ENCODE measurements at regions of chr7 and their contacts with region 1.

Region 1: DNA sequence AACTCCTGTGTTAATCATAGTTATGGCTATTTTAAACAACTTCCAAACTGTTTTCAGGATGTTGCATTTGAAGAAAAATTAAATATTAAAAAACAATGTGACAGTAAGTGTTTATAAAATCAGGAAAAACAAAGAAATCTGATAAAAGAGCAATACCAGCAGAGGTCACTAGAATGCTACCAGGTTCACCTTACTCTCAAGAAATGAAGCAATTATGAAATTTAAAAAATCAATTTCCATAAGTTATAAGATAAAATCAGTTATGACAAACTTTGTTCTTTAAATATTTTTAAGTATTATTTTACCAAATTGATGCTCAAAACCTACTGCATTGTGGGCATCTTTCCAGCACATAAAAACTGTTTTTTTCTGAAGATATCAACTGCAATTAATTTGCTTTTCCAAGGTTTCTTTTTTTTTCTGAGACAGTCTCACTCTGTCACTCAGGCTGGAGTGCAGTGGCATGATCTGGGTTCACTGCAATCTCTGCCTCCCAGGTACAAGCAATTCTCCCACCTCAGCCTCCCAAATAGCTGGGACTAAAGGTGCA is 50.7 kb upstream of the RHEB start:
- DNase-seq: peak; percentile 52
- ATAC-seq: no peak
- H3K4me3 ChIP-seq: no peak overlapping the region
- H3K27ac ChIP-seq: no peak overlapping the region
- H3K4me1 ChIP-seq: peaks cover 12% of the 10 kb centered on the region; the same call in 1 of the 2 replicates
- H3K27me3 ChIP-seq: no peaks in the 10 kb centered on the region
- CTCF ChIP-seq: peak; percentile 72

Region 2: GRCh38 chr7:150974468-150975391 is 595.7 kb before region 1 on chr7:
- CTCF ChIA-PET with region 1: no interaction called
- POLR2A ChIA-PET with region 1: no interaction called
- intact Hi-C with region 1: no loop called
- DNase-seq: peak; percentile 36
- ATAC-seq: peak; percentile 53
- H3K4me3 ChIP-seq: peak overlapping the region; percentile 71
- H3K27ac ChIP-seq: no peak overlapping the region
- H3K4me1 ChIP-seq: no peaks in the 10 kb centered on the region; the same call in 1 of the 2 replicates
- H3K27me3 ChIP-seq: peaks cover 11% of the 10 kb centered on the region
- CTCF ChIP-seq: peak; percentile 29; the same call in 1 of the 2 replicates

Region 3: DNA sequence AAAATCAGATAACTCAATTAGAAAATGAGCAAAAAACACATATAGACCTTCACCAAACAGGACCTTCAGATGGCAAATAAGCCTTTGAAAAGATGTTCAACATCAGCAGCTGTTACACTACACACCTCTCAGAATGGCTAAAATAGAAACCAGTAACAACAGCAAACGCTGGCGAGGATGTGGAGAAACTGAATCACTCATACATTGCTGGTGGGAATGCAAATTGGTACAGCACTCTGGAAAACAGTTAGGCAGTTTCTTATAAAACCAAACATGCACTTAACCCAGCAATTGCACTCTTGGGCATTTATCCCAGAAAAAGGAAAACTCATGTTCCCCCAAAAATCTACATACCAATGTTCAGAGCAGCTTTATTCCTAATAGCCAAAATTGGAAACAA is 284.3 kb before region 1 on chr7:
- CTCF ChIA-PET with region 1: no interaction called
- POLR2A ChIA-PET with region 1: no interaction called
- intact Hi-C with region 1: no loop called
- DNase-seq: no peak
- ATAC-seq: no peak
- H3K4me3 ChIP-seq: no peak overlapping the region
- H3K27ac ChIP-seq: no peak overlapping the region
- H3K4me1 ChIP-seq: no peaks in the 10 kb centered on the region
- H3K27me3 ChIP-seq: peaks cover 26% of the 10 kb centered on the region
- CTCF ChIP-seq: no peak

Region 4: GRCh38 chr7:151459726-151460473 is 110.5 kb before region 1 on chr7:
- CTCF ChIA-PET with region 1: no interaction called
- POLR2A ChIA-PET with region 1: no interaction called
- intact Hi-C with region 1: no loop called
- DNase-seq: peak; percentile 92
- ATAC-seq: peak; percentile 85
- H3K4me3 ChIP-seq: peak overlapping the region; percentile 64
- H3K27ac ChIP-seq: peak overlapping the region; percentile 70
- H3K4me1 ChIP-seq: peaks cover 22% of the 10 kb centered on the region
- H3K27me3 ChIP-seq: no peaks in the 10 kb centered on the region
- CTCF ChIP-seq: peak; percentile 34; the same call in 1 of the 2 replicates

Region 5: GRCh38 chr7:151585744-151586393 is 15.4 kb after region 1 on chr7:
- CTCF ChIA-PET with region 1: no interaction called
- POLR2A ChIA-PET with region 1: no interaction called
- intact Hi-C with region 1: no loop called
- DNase-seq: no peak
- ATAC-seq: no peak
- H3K4me3 ChIP-seq: no peak overlapping the region
- H3K27ac ChIP-seq: no peak overlapping the region
- H3K4me1 ChIP-seq: no peaks in the 10 kb centered on the region
- H3K27me3 ChIP-seq: no peaks in the 10 kb centered on the region
- CTCF ChIP-seq: no peak

Region 6: DNA sequence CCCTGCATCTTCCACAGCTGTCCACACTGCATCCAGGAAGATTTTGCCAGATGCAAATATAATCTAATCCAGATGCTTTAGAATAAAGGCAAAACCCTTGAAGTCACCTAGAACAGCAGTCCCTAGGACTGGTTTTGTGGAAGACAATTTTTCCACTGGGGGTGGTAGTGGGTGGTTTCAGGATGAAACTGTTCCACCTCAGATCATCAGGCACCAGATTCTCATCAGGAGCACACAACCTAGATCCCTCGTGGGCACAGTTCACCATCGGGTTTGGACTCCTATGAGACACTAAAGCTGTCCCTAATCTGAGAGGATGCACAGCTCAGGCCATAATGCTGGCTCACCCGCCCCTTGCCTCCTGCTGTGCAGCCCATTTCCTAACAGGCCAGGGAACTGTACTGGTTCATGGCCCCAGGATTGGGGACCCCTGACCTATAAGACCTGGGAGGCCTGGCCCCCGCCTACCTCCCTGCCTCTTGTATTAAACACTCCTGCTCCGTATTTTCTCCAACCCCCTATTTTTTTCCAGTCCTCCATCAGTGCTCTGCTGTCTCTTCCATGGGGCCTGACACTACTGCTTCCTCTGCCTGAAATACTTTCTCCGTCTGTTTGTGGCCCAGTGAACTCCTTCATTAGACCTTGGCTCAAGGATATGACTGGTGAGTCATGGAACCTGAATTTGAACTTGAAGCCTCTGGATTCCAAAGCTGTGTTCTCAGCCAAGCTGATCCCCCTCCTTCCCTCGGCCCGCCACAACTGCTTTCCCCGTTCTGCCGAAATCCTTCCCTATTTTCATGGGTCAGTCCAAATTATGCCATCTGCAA is 29.2 kb after region 1 on chr7:
- CTCF ChIA-PET with region 1: no interaction called
- POLR2A ChIA-PET with region 1: no interaction called
- intact Hi-C with region 1: loop called (anchors 2 kb)
- DNase-seq: peak; percentile 87
- ATAC-seq: peak; percentile 63
- H3K4me3 ChIP-seq: no peak overlapping the region
- H3K27ac ChIP-seq: peak overlapping the region; percentile 72
- H3K4me1 ChIP-seq: peaks cover 43% of the 10 kb centered on the region
- H3K27me3 ChIP-seq: no peaks in the 10 kb centered on the region
- CTCF ChIP-seq: no peak

Region 7: DNA sequence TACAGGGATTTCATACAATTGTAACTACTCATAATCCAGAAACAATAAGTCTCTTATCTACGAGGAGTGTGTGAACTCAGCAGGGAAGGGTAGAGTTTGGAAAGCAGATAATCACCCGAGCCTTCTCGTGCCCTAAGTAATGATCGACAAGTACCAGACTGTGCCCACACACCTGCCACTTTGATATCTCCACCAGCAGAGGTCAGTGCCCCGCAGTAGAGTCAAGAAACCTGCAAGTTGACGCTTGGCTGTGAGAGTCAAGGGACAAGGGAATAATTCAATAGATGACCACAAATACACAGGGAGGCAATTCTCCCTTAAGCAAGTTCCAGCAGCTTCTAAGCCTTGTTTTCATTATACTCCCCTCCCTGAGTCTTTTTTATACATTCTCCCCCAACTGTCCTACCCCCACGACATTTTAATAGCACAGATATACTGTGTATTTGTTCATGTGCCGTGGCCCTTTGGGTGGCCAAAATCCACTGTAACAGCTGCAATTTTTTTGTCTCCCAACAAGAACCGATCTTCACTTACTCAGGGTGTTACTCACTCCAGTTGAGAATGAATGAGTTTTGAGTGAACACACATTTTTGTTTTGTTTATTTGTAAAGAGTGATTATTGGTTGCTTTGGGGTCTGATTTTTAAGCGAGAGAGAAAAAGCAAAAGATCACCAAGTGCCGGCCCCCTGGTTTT is 56.1 kb after region 1 on chr7:
- CTCF ChIA-PET with region 1: no interaction called
- POLR2A ChIA-PET with region 1: no interaction called
- intact Hi-C with region 1: loop called (anchors 5 kb)
- DNase-seq: peak; percentile 66
- ATAC-seq: peak; percentile 71
- H3K4me3 ChIP-seq: no peak overlapping the region
- H3K27ac ChIP-seq: no peak overlapping the region
- H3K4me1 ChIP-seq: peaks cover 21% of the 10 kb centered on the region
- H3K27me3 ChIP-seq: no peaks in the 10 kb centered on the region
- CTCF ChIP-seq: peak; percentile 76

Region 8: DNA sequence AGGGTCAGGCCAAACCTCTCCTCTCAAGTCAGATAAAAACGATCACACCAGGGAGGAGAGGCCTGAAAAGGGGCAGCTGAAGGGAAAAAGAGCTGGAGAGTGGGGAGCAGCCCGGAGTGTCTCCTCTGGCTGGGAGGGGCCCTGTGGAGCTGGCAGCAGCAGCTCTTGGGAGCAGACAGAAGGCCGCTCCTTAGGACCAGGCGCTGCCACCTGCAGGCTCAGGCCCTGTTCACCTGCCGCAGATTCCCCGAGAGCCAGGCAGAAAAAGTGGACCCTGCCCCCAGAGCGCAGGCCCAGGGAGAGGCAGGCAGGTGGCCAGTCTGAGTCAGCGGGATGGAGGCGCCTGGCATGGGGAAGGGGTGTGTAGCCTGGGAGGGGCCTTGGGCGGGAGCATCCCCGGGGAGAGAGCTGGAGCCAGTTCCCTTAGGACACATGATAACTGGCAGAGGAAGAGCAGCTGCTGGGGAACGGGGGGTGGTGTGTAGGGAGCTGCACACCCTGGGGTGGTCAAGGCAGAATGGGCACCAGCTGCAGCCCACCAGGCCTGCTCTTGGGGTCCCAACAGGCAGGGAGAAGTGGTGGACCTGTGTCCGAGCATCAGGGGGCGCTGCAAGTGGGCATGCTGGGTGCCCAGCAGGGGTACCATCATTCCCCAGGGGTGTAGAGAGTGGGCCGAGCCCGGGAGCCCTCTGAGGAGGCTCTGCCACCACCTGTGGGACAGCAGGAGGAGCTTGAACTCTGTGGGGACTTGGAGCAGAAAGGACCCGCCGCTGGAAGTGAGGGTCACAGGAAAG is 126.5 kb after region 1 on chr7:
- CTCF ChIA-PET with region 1: no interaction called
- POLR2A ChIA-PET with region 1: interaction called, 3 read pairs
- intact Hi-C with region 1: loop called (anchors 2 kb)
- DNase-seq: peak; percentile 70
- ATAC-seq: peak; percentile 74
- H3K4me3 ChIP-seq: no peak overlapping the region
- H3K27ac ChIP-seq: no peak overlapping the region
- H3K4me1 ChIP-seq: peaks cover 28% of the 10 kb centered on the region
- H3K27me3 ChIP-seq: no peaks in the 10 kb centered on the region
- CTCF ChIP-seq: 0 out of 2 replicates have a peak, but pooled peaks have one; percentile 20

Region 9: GRCh38 chr7:151705636-151706276 is 135.3 kb after region 1 on chr7:
- CTCF ChIA-PET with region 1: no interaction called
- POLR2A ChIA-PET with region 1: no interaction called
- intact Hi-C with region 1: loop called (anchors 1 kb)
- DNase-seq: peak; percentile 56
- ATAC-seq: peak; percentile 86
- H3K4me3 ChIP-seq: peak overlapping the region; percentile 17; the same call in 1 of the 2 replicates
- H3K27ac ChIP-seq: no peak overlapping the region
- H3K4me1 ChIP-seq: peaks cover 9% of the 10 kb centered on the region; the same call in 1 of the 2 replicates
- H3K27me3 ChIP-seq: no peaks in the 10 kb centered on the region
- CTCF ChIP-seq: peak; percentile 80

Region 10: GRCh38 chr7:151759591-151760042 is 189.2 kb after region 1 on chr7:
- CTCF ChIA-PET with region 1: no interaction called
- POLR2A ChIA-PET with region 1: no interaction called
- intact Hi-C with region 1: loop called (anchors 1 kb)
- DNase-seq: peak; percentile 76
- ATAC-seq: peak; percentile 72
- H3K4me3 ChIP-seq: no peak overlapping the region
- H3K27ac ChIP-seq: no peak overlapping the region
- H3K4me1 ChIP-seq: peaks cover 21% of the 10 kb centered on the region
- H3K27me3 ChIP-seq: no peaks in the 10 kb centered on the region
- CTCF ChIP-seq: peak; percentile 93

Measured in PC-3 (cell line).